Dorsolateral prefrontal cortex (tissue), 120 donors: ENCODE measurements at regions of chr1 and their contacts with region 1.

Region 1: GRCh38 chr1:114780344-114781226 is at the start of gene SIKE1:
- DNase-seq: peak; percentile 84 to 97 (median 94)
- H3K4me3 ChIP-seq: peak within 1 kb of the TSS; percentile 53 to 99 (median 89)
- H3K27ac ChIP-seq: peak within 1 kb of the TSS; percentile 13 to 94 (median 79)
- H3K27me3 ChIP-seq: peaks cover 0 to 6% (median 0%) of the 10 kb centered on the region in 45 donors
- CTCF ChIP-seq: peak in 28 of 56 donors; percentile 10 to 47 (median 28)
- total RNA-seq, gene SIKE1: 19.8 to 45.5 (median 30.5) TPM

Region 2: GRCh38 chr1:114757455-114758250 is 22.9 kb before region 1 on chr1 and contains the start of gene CSDE1:
- intact Hi-C with region 1: loop called (anchors 1 kb)
- DNase-seq: peak; percentile 93 to 98 (median 96)
- H3K4me3 ChIP-seq: peak within 1 kb of the TSS; percentile 66 to 100 (median 95)
- H3K27ac ChIP-seq: peak within 1 kb of the TSS; percentile 95 to 100 (median 99)
- H3K27me3 ChIP-seq: no peaks in the 10 kb centered on the region
- CTCF ChIP-seq: peak in 41 of 56 donors; percentile 3 to 50 (median 27)
- total RNA-seq, gene CSDE1: 340 to 487 (median 404) TPM

Region 3: GRCh38 chr1:114828251-114828650 is 47.7 kb after region 1 on chr1:
- intact Hi-C with region 1: no loop called
- DNase-seq: no peak
- H3K4me3 ChIP-seq: no peak overlapping the region
- H3K27ac ChIP-seq: no peak overlapping the region
- H3K27me3 ChIP-seq: peaks cover 0 to 3% (median 0%) of the 10 kb centered on the region in 45 donors
- CTCF ChIP-seq: no peak